ENCODE measurements at regions of chr19 and their contacts with region 1.

Region 1: GRCh38 chr19:35204799-35205732 is 23.5 kb downstream of the FAM187B start:
- H3K4me3 Mint-ChIP-seq: no peak overlapping the region
- H3K27ac Mint-ChIP-seq: peak overlapping the region; percentile 85
- H3K4me1 Mint-ChIP-seq: peaks cover 44% of the 10 kb centered on the region
- H3K27me3 Mint-ChIP-seq: peaks cover 13% of the 10 kb centered on the region

Region 2: DNA sequence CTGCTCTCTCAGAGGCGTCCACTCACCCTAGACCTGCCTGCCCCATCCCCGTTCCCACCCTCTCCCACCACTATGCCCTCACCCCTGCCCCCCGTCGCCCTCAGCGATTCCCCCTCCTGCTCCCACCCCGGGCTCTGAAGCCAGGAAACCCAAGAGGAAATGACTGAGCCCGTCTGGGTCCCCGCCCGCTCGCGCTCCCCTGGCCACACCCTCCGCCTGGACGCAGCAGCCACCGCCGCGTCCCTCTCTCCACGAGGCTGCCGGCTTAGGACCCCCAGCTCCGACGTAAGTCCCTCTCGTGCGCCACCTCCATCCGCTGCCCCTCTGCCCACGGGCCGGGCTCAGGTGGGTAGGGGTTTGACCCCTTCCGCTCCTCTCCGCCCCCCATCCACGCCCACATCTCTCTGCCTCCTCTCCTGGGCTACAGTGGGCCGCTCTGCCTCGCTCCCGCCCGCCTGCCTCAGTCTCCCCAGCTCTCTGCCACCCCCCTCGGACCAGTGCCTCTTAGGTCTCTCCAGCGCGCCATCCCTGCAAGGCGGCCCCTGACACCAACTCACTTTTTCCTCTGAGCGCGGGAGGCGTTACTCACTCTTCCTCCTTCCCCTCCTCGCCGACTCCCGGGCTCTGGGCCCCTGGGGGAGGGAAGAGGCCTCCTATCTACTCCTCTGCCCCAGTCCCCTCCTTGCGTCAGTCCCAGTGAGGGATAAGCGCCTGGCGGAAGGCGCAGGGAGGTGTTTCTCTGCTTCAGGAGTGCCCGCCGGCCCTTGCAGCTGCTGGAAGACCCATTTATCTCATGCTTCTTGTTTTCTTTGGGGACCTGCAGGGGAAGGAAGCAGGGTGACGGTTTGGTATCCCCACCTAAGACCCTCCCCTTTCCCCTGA is 50.3 kb before region 1 on chr19 and contains the start of gene FXYD5:
- intact Hi-C with region 1: loop called (anchors 10 kb)
- H3K4me3 Mint-ChIP-seq: peak within 1 kb of the TSS; percentile 100
- H3K27ac Mint-ChIP-seq: peak within 1 kb of the TSS; percentile 98
- H3K4me1 Mint-ChIP-seq: peaks cover 62% of the 10 kb centered on the region
- H3K27me3 Mint-ChIP-seq: peaks cover 14% of the 10 kb centered on the region

Region 3: DNA sequence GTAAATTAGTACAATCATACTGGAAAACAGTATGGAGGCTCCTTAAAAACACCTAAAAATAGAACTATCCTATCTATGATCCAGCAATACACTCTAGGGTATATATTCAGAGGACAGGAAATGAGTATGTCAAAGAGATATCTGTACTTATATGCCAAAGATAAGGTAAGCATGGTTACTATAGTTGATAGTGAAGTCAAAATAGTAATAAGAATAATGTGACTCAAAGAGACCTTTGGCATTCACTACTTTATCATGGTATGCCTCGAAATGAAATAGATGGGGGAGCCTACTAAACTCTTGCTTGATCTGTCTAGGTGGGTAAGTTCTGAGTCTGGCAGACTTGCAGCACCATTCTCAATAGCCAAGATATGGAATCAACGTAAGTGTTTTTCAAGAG is 20.2 kb before region 1 on chr19:
- intact Hi-C with region 1: no loop called
- H3K4me3 Mint-ChIP-seq: no peak overlapping the region
- H3K27ac Mint-ChIP-seq: no peak overlapping the region
- H3K4me1 Mint-ChIP-seq: no peaks in the 10 kb centered on the region
- H3K27me3 Mint-ChIP-seq: peaks cover 5% of the 10 kb centered on the region

Measured in dendritic cell treated with granulocyte-macrophage colony-stimulating factor and Interleukin-4, amounts not matched to agents 40 ng/mL and 50 ng/mL, for 4 days (primary cell).